A673 (cell line): ENCODE measurements at regions of chr6 and their contacts with region 1.

Region 1: DNA sequence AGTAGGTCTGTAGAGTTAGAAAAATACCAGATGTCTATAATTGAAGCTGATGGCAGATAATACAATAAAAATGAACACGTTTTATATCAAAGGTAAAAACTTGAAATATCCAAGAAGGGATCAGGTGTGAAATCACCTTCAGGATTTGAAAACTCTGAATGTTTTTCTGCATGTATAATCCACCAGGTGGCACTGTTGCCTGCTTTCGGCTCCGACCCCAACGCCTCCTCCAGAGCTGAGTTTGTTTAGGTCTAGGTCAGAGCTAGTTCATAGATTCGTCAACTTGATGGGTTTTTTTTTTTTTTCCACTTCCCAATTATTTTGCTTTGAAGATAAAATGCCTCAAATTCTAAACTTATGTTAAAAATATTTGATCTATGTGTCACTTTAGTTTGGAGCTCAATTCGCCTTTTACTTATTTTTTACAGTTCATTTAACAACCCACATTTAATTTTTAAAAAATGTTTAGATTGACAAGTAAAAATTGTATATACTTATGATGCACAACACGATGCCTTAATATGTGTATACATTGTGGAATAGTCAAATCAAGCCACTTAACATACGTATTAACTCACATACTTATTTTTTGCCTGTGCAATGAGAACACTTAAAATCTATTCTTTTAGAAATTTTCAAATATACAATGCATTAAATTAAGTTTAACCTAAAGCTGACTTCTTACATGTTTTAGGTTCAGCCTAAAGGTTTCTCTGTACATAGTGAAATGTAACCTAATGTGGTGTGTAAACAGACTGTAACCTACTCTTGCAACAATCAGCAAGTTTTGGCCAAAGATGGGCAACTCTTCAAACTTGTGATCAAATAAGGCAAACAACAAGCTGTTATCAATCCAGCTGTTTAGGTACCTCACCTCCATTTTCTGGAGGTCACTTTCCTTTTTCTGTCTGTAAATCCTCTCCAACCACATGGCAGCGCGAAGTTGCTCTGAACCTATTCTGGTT is 39.4 kb upstream of the ENPP4 start:
- DNase-seq: peak; percentile 56
- H3K4me3 ChIP-seq: no peak overlapping the region
- H3K27ac ChIP-seq: no peak overlapping the region
- H3K4me1 ChIP-seq: no peaks in the 10 kb centered on the region
- H3K27me3 ChIP-seq: peaks cover 7% of the 10 kb centered on the region
- CTCF ChIP-seq: peak; percentile 86

Region 2: GRCh38 chr6:46221222-46221793 is 130.9 kb after region 1 on chr6:
- CTCF ChIA-PET with region 1: interaction called, 3 read pairs
- POLR2A ChIA-PET with region 1: no interaction called
- intact Hi-C with region 1: loop called (anchors 1 kb)
- DNase-seq: peak; percentile 52
- H3K4me3 ChIP-seq: no peak overlapping the region
- H3K27ac ChIP-seq: no peak overlapping the region
- H3K4me1 ChIP-seq: no peaks in the 10 kb centered on the region
- H3K27me3 ChIP-seq: peaks cover 7% of the 10 kb centered on the region
- CTCF ChIP-seq: peak; percentile 74

Region 3: GRCh38 chr6:46410334-46410953 is 320.0 kb after region 1 on chr6:
- CTCF ChIA-PET with region 1: interaction called, 18 read pairs
- POLR2A ChIA-PET with region 1: no interaction called
- intact Hi-C with region 1: loop called (anchors 1 kb)
- DNase-seq: peak; percentile 49
- H3K4me3 ChIP-seq: no peak overlapping the region
- H3K27ac ChIP-seq: no peak overlapping the region
- H3K4me1 ChIP-seq: no peaks in the 10 kb centered on the region
- H3K27me3 ChIP-seq: peaks cover 37% of the 10 kb centered on the region
- CTCF ChIP-seq: peak; percentile 78

Region 4: DNA sequence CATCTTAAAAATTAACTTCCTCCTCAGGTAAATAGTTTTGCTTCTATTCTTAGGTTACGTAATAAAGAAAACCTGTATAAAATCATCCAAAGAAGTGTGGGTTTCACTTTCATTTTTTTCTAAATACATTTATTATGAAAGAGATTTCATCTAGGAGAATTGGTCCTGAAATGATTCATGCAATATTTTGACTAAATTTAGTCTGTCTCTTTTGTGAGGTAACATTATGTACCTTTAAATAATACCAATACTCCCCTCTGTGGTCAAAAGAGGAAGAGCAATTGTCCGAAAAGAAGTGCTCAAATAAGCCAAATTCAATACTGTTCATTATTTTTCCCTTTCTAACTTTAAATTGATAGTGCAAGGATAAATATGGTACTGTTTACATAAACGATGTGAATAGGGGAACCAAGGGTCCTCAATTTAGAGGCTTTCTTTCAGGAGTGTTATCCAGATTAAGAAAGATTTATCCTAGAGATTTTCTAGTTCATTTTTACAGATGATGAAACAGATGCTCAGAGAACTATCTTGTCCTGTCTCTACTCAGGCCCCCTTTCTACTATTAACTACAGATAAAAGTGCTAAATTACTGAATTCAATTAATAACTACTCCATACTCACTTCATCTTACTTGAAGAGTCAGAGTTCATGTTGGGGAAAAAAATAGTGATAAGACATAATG is 536.0 kb after region 1 on chr6:
- CTCF ChIA-PET with region 1: no interaction called
- POLR2A ChIA-PET with region 1: no interaction called
- intact Hi-C with region 1: loop called (anchors 10 kb)
- DNase-seq: peak; percentile 39
- H3K4me3 ChIP-seq: no peak overlapping the region
- H3K27ac ChIP-seq: no peak overlapping the region
- H3K4me1 ChIP-seq: no peaks in the 10 kb centered on the region
- H3K27me3 ChIP-seq: peaks cover 1% of the 10 kb centered on the region
- CTCF ChIP-seq: peak; percentile 64

Region 5: DNA sequence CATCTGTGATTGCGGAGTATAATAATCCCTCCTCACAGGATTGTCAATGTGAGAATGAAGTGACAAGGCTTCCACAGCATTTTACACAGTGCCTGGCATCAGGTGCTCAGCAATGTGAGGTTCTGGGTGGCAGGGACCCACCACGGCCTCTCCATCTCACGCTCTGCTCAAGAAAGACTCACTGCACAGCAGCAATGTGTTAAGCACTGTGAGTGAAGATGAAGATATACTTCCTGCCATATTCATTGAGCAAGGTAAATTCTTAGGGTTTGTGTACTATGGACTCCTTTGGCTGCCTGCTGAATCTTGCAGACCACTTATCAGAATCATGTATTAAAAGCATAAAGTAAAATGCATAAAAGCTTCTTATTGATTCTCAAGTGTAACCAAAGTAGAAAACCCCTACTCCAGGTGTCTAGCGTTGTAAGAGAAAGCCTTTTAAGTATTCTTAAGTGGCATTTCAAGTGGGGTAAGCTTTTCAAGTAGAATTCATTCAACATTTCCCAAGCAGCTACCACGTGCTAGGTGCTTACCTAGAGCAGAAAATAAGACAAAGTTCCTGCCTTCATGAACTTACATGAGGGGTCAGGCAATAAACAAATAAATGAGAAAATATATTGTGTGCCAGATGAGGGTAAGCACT is 685.8 kb after region 1 on chr6:
- CTCF ChIA-PET with region 1: no interaction called
- POLR2A ChIA-PET with region 1: no interaction called
- intact Hi-C with region 1: loop called (anchors 5 kb)
- DNase-seq: no peak
- H3K4me3 ChIP-seq: no peak overlapping the region
- H3K27ac ChIP-seq: no peak overlapping the region
- H3K4me1 ChIP-seq: no peaks in the 10 kb centered on the region
- H3K27me3 ChIP-seq: peaks cover 3% of the 10 kb centered on the region
- CTCF ChIP-seq: no peak